PC-9 (cell line): ENCODE measurements at regions of chr14 and their contacts with region 1.

Region 1: GRCh38 chr14:74368846-74369245 is 20.6 kb downstream of the VRTN start:
- DNase-seq: no peak
- H3K4me3 ChIP-seq: no peak overlapping the region
- H3K27ac ChIP-seq: no peak overlapping the region
- H3K4me1 ChIP-seq: no peaks in the 10 kb centered on the region
- H3K27me3 ChIP-seq: no peaks in the 10 kb centered on the region
- CTCF ChIP-seq: no peak

Region 2: DNA sequence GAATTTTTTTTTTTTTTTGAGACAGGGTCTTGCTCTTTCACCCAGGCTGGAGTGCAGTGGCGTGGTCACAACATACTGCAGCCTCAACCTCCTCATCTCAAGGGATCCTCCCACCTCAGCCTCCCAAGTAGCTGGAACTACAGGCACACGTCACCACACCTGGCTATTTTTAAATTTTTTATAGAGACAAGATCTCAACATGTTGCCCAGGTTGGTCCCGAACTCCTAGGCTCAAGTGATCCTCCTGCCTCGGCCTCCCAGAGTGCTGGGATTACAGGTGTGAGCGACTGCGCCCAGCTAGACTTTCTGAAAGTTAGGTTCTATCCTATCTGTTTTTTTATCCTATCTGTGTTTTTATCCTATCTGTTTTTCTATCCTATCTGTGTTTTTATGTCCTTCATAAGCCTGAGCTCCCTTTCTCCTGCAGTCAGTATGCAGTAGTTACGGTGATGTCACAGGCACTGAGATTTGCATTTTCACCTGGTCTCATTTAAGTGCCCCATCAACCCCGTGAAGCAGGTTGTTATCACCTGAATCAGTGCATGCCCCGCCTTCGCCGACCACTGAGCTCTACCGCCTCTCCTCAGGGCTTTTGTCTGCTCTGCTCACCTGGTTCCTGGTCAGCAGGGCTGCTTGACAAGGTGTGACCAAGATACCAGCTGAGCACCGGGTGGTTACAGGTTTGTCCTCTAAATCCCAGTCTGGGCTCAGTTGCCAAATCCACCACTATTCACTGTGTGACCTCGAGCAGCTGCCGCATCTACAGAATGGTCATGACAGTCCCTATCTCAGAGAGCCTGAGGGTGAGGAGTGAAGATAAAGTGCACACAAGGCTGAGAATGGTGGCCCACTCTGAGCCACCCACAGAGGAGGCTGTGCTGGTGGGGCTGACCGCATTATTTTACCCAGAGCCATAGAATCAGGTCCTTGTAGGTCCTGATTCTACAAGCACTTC is 24.0 kb after region 1 on chr14:
- CTCF ChIA-PET with region 1: no interaction called
- POLR2A ChIA-PET with region 1: no interaction called
- intact Hi-C with region 1: no loop called
- DNase-seq: peak; percentile 45 to 65
- H3K4me3 ChIP-seq: no peak overlapping the region
- H3K27ac ChIP-seq: no peak overlapping the region
- H3K4me1 ChIP-seq: peaks cover 6% of the 10 kb centered on the region; the same call in 1 of the 2 replicates
- H3K27me3 ChIP-seq: no peaks in the 10 kb centered on the region
- CTCF ChIP-seq: no peak

Region 3: DNA sequence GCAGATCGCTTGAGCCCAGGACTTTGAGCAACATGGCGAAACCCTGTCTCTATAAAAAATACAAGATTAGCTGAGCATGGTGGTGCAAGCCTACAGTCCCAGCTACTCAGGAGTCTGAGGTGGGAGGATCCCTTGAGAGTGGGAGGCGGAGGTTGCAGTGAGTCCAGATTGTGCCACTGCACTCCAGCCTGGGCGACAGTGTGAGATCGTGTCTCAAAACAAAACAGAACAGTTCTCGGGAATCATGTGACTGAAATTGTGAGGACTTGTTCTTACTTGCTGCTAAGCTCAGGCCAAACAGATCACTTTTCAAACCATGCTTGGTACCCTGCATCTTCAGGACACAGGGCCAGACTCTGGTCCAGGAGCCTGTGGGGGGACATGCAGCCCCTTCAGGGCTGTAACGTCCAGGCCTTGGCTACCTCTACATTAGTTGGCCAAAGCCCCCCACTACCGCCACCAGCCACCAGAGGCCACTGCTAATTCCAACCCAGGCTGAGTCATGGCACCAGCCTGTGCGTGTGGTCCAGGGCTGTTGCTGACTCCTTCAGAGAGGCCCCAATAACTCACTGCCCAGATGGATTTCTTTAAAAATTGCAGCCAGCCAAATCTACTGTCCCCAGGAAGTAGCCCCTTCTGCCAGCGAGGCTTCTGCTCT is 90.6 kb after region 1 on chr14:
- CTCF ChIA-PET with region 1: interaction called, 14 read pairs
- POLR2A ChIA-PET with region 1: no interaction called
- intact Hi-C with region 1: no loop called
- DNase-seq: peak in 1 of 2 experiments; percentile 65
- H3K4me3 ChIP-seq: no peak overlapping the region
- H3K27ac ChIP-seq: no peak overlapping the region
- H3K4me1 ChIP-seq: peaks cover 7% of the 10 kb centered on the region
- H3K27me3 ChIP-seq: no peaks in the 10 kb centered on the region
- CTCF ChIP-seq: peak; percentile 72

Region 4: DNA sequence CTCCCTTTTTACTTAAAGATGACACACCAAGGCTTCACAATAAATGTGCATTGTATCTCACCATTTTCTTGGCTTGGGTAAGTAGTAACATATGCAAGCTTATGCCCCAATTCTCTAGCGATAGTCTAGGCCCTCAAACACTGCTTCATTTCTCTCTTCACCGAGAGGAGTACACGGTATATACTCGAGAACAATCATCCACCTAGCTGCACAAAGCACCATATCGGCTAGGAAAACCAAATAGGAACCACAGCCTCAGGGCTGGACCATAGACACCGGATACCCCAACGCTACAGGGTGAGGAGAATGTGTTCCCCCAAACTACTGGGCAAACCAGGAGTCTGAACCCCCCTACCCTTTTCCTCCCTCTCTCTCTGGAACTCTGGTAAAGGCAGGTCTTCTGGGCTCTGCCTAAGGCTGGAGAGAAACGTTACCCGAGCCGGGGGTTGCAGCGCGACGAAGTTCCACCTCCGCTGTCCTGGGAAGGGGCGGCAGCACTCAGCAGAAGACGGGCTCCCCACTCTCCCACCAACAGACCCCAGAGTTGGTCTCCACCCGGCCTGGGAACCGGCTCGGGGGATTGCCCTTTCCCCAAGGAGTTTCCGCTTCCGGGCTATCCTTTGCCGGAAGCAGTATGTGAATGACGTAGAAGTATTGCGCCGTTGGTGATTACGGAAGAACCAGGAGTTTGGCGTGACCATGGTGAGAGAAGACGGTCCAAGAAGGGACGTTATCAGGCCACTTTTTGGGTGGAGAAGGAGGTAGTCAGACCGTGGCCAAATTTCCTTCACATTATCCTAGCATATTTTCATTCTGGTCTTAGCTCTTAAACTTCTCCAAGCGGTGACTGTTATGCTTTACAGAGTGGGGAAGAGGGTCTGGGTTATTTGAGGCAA is 343.9 kb after region 1 on chr14 and contains the starts of genes AREL1 and FCF1:
- CTCF ChIA-PET with region 1: no interaction called
- POLR2A ChIA-PET with region 1: interaction called, 10 read pairs
- intact Hi-C with region 1: no loop called
- DNase-seq: peak; percentile 86 to 92
- H3K4me3 ChIP-seq: peak within 1 kb of the TSS; percentile 67
- H3K27ac ChIP-seq: peak within 1 kb of the TSS; percentile 27; the same call in 1 of the 2 replicates
- H3K4me1 ChIP-seq: peaks cover 21% of the 10 kb centered on the region
- H3K27me3 ChIP-seq: no peaks in the 10 kb centered on the region
- CTCF ChIP-seq: no peak
- total RNA-seq, gene AREL1: 98.4 and 108 TPM in 2 replicates
- total RNA-seq, gene FCF1: 175 and 191 TPM in 2 replicates